ENCODE measurements at regions of chr7 and their contacts with region 1.

Region 1: DNA sequence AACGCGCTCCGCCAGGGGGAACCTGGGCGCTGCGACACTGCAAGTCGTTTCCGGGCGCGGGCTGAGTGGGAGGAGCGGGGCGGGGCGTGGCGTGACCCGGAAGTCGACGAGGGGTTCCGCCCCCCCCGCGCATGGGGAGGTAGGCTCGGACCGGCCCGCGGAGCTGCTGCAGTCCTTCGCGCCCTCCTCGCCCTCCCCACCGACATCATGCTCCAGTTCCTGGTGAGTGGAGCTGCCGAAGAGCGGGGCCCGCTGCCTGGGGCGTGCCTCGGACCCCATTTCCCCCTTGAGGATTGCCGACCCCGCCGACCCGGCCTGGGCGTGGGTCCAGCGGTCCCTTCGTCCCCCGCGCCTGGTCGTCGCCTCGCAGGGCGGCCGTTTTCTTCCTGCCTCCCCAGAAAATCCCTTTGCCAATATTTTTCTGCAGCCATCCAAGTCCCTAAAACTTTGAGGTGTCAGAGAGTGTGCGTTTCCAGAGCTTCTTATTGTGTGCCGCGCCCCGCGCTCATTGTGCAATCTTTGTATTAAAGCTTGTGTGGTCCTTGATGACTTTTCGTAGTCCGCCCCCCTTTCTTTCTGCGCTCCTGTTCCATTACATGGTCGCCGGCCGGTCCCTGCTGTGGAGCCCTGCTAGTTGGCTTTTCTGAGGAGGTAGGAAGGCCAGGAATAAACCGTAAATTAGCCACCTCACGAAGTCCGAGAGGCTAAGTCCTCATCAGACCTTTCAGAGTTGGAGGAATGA is at the start of gene STMP1:
- DNase-seq: peak; percentile 81 to 98
- H3K4me3 ChIP-seq: peak within 1 kb of the TSS; percentile 73 to 86
- H3K27ac ChIP-seq: peak within 1 kb of the TSS; percentile 87 to 96
- H3K4me1 ChIP-seq: peaks cover 0 to 19% of the 10 kb centered on the region in 2 donors
- H3K27me3 ChIP-seq: no peaks in the 10 kb centered on the region
- CTCF ChIP-seq: peak in 1 of 3 experiments; percentile 95
- total RNA-seq, gene STMP1: 10.1 TPM

Region 2: DNA sequence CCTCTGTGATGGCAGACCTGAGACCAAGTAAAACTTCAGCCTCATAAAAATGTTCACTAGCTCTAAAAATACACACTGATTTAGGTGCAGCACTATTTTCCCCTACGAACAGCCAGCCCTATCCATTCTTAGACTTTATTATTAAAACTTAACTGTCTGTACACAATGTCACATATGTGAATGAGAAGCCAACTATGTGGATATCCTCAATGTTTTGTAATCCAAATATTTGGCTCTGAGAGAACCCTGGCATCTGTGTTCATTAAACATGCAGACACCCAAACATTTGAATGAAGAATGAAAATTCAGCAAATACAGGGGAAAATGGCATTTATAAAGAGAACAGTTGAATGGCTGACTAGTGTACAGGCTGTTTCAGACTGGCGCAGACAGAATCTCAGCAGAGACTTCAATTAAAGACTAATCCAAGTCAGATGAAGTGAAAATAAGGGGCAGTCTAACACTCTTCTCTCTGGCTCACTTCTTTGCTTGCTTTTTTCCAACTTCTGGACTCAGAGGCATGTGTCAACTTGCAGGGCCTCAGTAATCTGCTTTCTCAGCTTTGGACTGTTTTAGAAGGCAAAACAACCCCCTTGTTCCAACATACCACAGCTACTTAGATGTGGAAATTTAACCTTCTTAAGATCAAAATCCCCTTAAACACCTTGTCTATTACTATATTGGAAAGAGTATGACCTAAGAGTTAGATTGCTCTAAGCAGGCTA is 133.5 kb after region 1 on chr7:
- intact Hi-C with region 1: loop called (anchors 2 kb)
- DNase-seq: no peak
- H3K4me3 ChIP-seq: no peak overlapping the region
- H3K27ac ChIP-seq: peak overlapping the region; percentile 81 to 87
- H3K4me1 ChIP-seq: peaks cover 7 to 28% of the 10 kb centered on the region in 2 donors
- H3K27me3 ChIP-seq: no peaks in the 10 kb centered on the region
- CTCF ChIP-seq: no peak

Region 3: GRCh38 chr7:135977007-135977741 is 314.6 kb after region 1 on chr7 and contains the start of gene MTPN:
- intact Hi-C with region 1: loop called (anchors 1 kb)
- DNase-seq: peak; percentile 98 to 100
- H3K4me3 ChIP-seq: peak within 1 kb of the TSS; percentile 85
- H3K27ac ChIP-seq: peak within 1 kb of the TSS; percentile 81 to 84
- H3K4me1 ChIP-seq: peaks cover 0 to 23% of the 10 kb centered on the region in 2 donors
- H3K27me3 ChIP-seq: no peaks in the 10 kb centered on the region
- CTCF ChIP-seq: no peak
- total RNA-seq, gene MTPN: 43.5 TPM

Region 4: DNA sequence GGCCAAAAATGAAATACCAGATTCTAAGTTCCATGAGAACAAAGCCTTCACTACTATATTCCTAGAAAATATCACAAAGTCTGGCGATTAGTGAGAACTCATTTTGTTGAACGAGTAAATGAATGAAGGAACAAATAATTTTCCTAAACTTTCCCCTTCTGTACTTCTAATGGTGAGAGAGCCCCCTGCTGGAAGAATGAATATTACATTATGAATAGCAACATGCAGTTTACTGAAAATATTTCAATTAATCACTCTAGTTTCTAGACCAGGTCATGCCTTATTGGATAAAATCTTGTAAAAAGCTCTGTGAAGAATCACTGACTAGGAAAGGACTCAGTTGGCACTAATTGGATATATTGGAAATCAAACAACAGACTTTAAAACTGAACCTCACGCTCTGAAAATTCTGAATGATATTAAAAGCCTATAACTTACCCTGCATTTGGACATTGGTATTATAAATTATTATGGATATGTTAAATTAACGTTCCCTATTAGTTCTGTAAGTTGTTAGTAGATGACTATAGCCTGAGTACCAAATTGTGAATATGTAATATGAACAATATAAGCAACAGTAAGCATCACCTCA is 347.0 kb after region 1 on chr7:
- intact Hi-C with region 1: loop called (anchors 2 kb)
- DNase-seq: no peak
- H3K4me3 ChIP-seq: no peak overlapping the region
- H3K27ac ChIP-seq: no peak overlapping the region
- H3K4me1 ChIP-seq: no peaks in the 10 kb centered on the region
- H3K27me3 ChIP-seq: no peaks in the 10 kb centered on the region
- CTCF ChIP-seq: peak; percentile 58 to 84 (median 70)

Region 5: DNA sequence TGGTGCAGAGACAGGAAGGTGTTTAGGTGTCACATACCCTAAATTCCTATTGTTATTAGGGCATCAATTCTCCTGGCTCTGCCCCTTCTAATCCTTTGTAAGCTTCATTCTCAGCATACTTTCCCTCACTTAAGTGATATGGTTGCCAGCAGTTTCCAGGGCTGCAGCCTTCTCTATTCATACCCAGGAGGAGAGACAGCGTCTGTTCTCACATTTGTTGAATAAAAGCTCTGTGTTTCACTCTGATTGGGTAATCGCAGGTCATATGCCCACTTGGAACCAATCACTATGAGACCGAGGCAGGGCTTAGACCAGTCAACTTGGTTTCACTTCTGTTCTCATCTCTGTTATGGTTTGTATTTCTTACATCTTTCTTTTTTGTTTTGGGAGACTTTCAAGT is 424.2 kb after region 1 on chr7:
- intact Hi-C with region 1: loop called (anchors 2 kb)
- DNase-seq: peak; percentile 14 to 78
- H3K4me3 ChIP-seq: peak overlapping the region; percentile 47 to 58
- H3K27ac ChIP-seq: peak overlapping the region in 1 of 2 donors; percentile 8
- H3K4me1 ChIP-seq: no peaks in the 10 kb centered on the region
- H3K27me3 ChIP-seq: no peaks in the 10 kb centered on the region
- CTCF ChIP-seq: no peak